Activated CD4-positive, alpha-beta T cell treated with anti-CD3 and anti-CD28 coated beads for 36 hours (primary cell): ENCODE measurements at regions of chr2 and their contacts with region 1.

Region 1: DNA sequence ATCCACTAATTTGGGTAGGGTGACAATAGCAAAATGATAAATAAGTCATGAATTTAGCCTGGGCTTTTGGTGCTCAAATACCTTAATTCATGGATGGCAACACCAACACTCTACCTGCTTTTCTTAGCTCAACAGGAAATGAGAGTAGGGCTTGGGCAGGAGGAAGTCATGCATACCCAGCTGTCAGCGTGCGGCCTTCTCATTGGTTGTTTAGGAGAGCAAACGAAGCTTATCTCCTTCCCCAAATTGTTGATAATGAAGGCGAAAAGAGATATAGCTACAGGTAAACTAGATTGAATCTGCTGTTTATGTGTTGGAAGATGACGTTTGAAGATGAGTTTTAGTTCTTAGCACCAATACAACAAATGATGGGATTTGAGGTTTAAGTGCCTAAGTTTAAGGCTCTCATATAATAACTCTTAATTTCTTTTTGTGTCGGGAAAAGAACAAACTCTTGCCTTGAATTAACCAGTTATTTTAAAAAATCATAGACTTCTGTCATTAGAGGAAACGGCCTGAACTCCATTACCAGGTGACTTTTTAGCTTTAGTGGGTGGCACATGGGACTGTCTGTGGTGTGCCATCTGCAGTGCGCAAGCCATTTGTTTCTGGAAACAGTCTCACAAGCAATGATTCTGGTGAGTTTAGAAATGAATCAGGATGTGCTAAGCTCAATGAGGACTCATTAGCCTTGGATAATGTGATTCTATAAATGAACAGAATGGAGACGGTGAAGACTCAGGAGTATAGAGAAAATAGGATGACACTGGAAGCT is 19.8 kb downstream of the MAP4K4 start:
- DNase-seq: peak; percentile 71
- ATAC-seq: peak; percentile 50
- H3K4me3 Mint-ChIP-seq: peak overlapping the region; percentile 9
- H3K27ac Mint-ChIP-seq: peak overlapping the region; percentile 92
- H3K4me1 Mint-ChIP-seq: peaks cover 90% of the 10 kb centered on the region
- H3K27me3 Mint-ChIP-seq: no peaks in the 10 kb centered on the region

Region 2: DNA sequence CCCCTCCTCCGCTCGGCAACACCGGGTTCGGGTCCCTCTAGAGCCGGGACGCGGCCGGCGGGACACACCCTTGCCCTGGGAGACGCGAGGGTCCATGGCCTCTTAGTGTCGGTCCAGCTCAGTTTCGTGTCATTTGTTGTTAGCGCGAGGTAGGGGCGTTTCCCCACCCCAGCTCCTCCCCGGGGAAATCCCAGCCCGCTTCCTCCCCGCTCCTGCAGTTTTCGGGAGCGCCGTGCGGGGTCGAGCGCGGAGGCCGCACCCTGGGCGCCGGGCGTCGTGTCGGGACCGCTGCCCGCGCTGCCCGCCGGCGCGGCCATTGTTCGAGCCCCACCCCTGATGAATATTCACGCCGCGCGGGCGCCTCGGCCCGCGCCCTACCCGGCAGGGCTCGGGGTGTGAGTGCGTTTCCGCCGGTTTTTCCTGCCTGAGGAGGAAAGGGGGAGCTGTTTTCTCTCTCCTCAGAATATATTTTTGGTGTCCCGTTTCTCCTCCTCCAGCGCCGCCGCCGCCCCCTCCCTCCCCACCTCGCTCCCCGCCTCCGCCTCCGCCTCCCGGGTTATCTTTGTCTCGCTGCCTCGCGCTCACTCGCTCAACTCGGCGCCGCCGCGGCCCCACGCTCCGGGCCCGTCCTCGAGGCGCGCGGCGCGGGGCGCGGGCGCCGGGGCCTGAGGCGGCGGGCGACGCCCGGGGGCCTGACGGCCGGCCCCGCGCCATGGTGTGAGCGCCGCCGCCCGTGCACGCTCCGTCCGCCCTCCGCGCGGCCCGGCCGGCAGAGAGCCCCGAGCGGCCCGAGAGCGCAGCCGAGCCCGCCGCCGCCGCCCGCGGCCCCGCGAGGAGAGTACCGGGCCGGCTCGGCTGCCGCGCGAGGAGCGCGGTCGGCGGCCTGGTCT is 19.9 kb before region 1 on chr2 and contains the start of gene MAP4K4:
- CTCF ChIA-PET with region 1: interaction called, 24 read pairs
- POLR2A ChIA-PET with region 1: interaction called, 4 read pairs
- intact Hi-C with region 1: loop called (anchors 1 kb)
- DNase-seq: peak; percentile 85
- ATAC-seq: peak; percentile 52
- H3K4me3 Mint-ChIP-seq: no peak within 1 kb of the TSS
- H3K27ac Mint-ChIP-seq: peak within 1 kb of the TSS; percentile 68
- H3K4me1 Mint-ChIP-seq: peaks cover 30% of the 10 kb centered on the region
- H3K27me3 Mint-ChIP-seq: no peaks in the 10 kb centered on the region
- total RNA-seq, gene MAP4K4: 62.3 to 70.2 TPM

Region 3: GRCh38 chr2:101729521-101730190 is 12.4 kb after region 1 on chr2:
- CTCF ChIA-PET with region 1: interaction called, 15 read pairs
- POLR2A ChIA-PET with region 1: interaction called, 9 read pairs
- intact Hi-C with region 1: loop called in 1 of 2 experiments (anchors 1 kb)
- DNase-seq: peak; percentile 59
- ATAC-seq: peak; percentile 62
- H3K4me3 Mint-ChIP-seq: peak overlapping the region; percentile 55
- H3K27ac Mint-ChIP-seq: peak overlapping the region; percentile 87
- H3K4me1 Mint-ChIP-seq: peaks cover 90% of the 10 kb centered on the region
- H3K27me3 Mint-ChIP-seq: no peaks in the 10 kb centered on the region

Region 4: GRCh38 chr2:101759162-101759561 is 41.9 kb after region 1 on chr2:
- CTCF ChIA-PET with region 1: no interaction called
- POLR2A ChIA-PET with region 1: interaction called, 8 read pairs
- intact Hi-C with region 1: loop called (anchors 1 to 5 kb)
- DNase-seq: no peak
- ATAC-seq: no peak
- H3K4me3 Mint-ChIP-seq: no peak overlapping the region
- H3K27ac Mint-ChIP-seq: no peak overlapping the region
- H3K4me1 Mint-ChIP-seq: peaks cover 73% of the 10 kb centered on the region
- H3K27me3 Mint-ChIP-seq: no peaks in the 10 kb centered on the region

Region 5: DNA sequence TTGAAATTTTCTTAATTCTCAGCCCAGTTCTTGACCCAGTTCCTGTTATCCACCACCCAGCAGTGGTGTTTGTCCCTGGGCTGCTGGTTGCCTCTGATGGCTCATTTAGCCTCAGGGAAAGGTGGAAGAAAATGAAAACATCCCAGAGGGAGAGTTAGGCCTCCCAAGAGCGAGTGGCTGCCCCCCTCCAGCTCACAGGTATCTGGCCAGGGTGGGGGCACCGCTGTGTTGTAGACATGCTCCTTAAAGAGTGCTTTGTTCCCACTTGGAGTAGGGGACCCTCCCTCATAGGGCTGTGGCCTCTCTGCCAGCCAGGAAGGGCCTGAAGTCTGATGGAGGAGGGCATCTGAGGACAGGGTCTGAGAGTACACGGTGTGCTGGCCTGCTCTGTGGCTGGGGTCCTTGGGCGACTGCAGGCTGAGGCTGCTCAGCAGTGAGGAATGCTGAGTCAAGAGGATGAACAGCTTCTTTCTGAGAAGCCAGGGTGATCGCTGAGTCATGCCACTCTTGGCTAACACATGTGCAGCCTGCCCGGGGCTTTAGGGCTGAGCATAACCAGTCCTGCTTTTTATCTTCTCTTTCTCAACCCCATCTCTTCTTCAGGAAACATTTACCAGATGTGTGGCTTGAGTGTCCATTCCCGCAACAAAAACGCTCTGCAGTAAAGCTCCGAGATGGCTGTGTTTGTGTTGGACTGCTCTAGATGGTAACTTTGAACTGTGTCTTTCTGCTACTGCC is 346.9 kb after region 1 on chr2:
- CTCF ChIA-PET with region 1: no interaction called
- POLR2A ChIA-PET with region 1: no interaction called
- intact Hi-C with region 1: no loop called
- DNase-seq: peak; percentile 77
- ATAC-seq: peak; percentile 35
- H3K4me3 Mint-ChIP-seq: no peak overlapping the region
- H3K27ac Mint-ChIP-seq: peak overlapping the region; percentile 86
- H3K4me1 Mint-ChIP-seq: peaks cover 38% of the 10 kb centered on the region
- H3K27me3 Mint-ChIP-seq: no peaks in the 10 kb centered on the region

Region 6: DNA sequence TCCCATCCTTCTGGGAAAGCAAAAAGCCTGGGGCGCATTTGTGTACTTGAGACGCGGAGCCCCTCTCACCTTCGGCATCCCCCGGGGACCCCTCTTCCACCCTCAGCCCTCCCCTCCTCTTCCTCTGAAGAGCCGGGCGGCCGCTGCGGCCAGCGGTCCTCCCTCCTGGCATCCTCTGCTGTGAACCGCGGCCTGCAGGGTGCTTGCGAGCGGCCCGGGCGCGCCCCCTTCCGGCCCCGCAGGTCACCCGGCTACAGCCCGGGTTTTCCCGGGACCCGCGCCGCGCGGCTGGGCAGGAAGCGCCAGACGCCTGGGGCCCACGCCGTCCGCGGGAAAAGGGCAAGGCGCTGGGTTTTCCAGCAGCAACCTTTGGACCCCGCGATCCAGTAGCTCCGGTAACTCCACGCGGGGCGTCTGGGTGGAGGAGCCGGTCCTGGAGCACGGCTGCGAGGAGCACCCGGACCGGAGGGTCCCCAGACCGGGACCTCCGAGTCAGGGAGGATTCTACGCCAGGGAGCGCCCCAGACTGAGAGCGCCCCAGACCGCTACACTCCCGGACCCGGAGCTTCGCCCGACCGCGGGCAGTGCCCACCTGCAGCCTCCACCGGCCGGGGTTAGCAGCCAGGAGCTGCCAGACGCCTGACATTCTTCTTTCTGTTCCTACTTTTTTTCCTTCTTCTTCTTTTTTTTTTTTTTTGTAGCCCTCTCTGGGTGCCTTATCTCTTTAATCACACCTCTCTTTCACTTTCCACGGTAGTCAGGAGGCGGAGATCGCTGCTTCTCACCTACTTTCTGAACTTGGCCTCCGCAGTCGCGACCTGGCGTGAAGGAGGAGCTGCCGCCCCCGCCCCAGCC is 638.5 kb after region 1 on chr2 and contains the start of gene IL18R1:
- CTCF ChIA-PET with region 1: no interaction called
- POLR2A ChIA-PET with region 1: no interaction called
- intact Hi-C with region 1: no loop called
- DNase-seq: peak; percentile 85
- ATAC-seq: peak; percentile 86
- H3K4me3 Mint-ChIP-seq: peak within 1 kb of the TSS; percentile 100
- H3K27ac Mint-ChIP-seq: peak within 1 kb of the TSS; percentile 99
- H3K4me1 Mint-ChIP-seq: peaks cover 36% of the 10 kb centered on the region
- H3K27me3 Mint-ChIP-seq: no peaks in the 10 kb centered on the region
- total RNA-seq, gene IL18R1: 22.4 to 23.4 TPM